MCF 10A (cell line): ENCODE measurements at regions of chr1 and their contacts with region 1.

Region 1: DNA sequence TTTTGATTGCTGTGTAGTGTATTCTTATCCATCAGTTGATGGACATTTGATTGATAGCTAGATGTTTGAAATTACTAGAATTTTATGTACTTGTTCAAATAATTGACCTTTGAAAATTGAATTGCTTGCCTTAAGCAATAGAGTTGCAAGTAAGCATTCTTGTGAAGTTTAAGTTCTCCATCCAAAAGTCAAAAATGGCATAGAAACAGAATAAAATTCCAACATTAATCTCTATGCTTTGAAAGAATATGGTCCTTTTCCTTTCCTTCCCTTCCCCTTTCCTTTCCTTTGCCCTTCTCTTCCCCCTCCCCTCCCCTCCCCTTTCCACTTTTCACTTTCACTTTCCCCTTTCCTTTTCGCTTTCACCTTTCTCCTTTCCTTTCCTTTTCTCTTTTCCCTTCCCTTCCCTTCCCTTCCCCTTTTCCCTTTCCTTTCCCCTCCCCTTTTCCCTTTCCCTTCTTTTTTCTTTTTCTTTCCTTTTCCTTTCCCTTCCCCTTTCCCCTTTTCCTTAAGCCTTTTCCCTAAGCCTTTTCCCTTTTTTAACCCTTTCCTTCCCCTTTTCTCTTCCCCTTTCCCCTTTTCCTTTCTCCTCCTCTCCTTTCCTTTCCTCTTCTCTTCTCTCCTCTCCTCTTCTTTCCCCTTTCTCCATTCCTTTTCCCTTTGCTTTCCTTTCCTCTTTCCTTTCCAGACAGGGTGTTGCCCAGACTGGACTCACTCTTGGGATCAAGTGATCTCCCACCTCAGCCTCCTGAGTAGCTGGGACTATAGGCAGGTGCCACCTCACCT is 67.4 kb downstream of the SASS6 start:
- DNase-seq: no peak
- H3K4me3 Mint-ChIP-seq: no peak overlapping the region
- H3K27ac Mint-ChIP-seq: peak overlapping the region; percentile 36
- H3K4me1 Mint-ChIP-seq: peaks cover 11% of the 10 kb centered on the region
- H3K27me3 Mint-ChIP-seq: no peaks in the 10 kb centered on the region
- CTCF ChIP-seq: no peak

Region 2: GRCh38 chr1:100051401-100051800 is 14.0 kb before region 1 on chr1:
- CTCF ChIA-PET with region 1: no interaction called
- POLR2A ChIA-PET with region 1: interaction called, 11 read pairs
- intact Hi-C with region 1: no loop called
- DNase-seq: no peak
- H3K4me3 Mint-ChIP-seq: no peak overlapping the region
- H3K27ac Mint-ChIP-seq: peak overlapping the region; percentile 37
- H3K4me1 Mint-ChIP-seq: peaks cover 28% of the 10 kb centered on the region
- H3K27me3 Mint-ChIP-seq: no peaks in the 10 kb centered on the region
- CTCF ChIP-seq: no peak